ENCODE measurements at regions of chr9 and their contacts with region 1.

Region 1: DNA sequence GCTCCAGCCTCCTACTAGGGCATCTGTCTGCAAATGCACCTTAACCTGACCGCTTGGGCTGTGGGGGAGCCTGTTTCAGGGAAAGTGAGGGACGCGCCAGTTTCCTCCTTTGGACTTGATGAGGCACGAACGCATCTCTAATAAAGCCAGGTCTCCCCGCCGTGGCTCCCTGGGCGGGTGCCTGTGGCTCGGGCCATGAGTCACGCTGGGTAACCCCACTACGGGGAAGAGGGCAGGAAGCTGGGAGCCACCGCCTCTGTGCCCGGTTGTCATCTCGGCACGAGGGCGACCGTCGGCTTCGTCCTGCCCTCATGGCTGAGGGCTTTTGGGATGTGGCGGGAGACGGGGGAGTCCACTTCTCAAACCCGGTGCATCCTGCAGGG is 12.1 kb downstream of the NOTCH1 start:
- DNase-seq: peak in 1 of 2 donors; percentile 54
- ATAC-seq: no peak
- H3K4me3 ChIP-seq: peak overlapping the region; percentile 25
- H3K27ac ChIP-seq: no peak overlapping the region
- H3K4me1 ChIP-seq: peaks cover 23% of the 10 kb centered on the region
- H3K27me3 ChIP-seq: no peaks in the 10 kb centered on the region
- CTCF ChIP-seq: no peak

Region 2: GRCh38 chr9:136494531-136495215 is 39.1 kb before region 1 on chr9:
- intact Hi-C with region 1: loop called in 1 of 2 experiments (anchors 5 kb)
- DNase-seq: no peak
- ATAC-seq: no peak
- H3K4me3 ChIP-seq: no peak overlapping the region
- H3K27ac ChIP-seq: no peak overlapping the region
- H3K4me1 ChIP-seq: no peaks in the 10 kb centered on the region
- H3K27me3 ChIP-seq: no peaks in the 10 kb centered on the region
- CTCF ChIP-seq: no peak

Region 3: GRCh38 chr9:136742591-136743391 is 209.0 kb after region 1 on chr9 and contains the start of gene LCN10:
- intact Hi-C with region 1: no loop called
- DNase-seq: no peak
- ATAC-seq: peak in 3 of 4 donors; percentile 4 to 32 (median 29)
- H3K4me3 ChIP-seq: no peak within 1 kb of the TSS
- H3K27ac ChIP-seq: no peak within 1 kb of the TSS
- H3K4me1 ChIP-seq: no peaks in the 10 kb centered on the region
- H3K27me3 ChIP-seq: peaks cover 0 to 45% (median 16%) of the 10 kb centered on the region in 3 donors
- CTCF ChIP-seq: no peak
- total RNA-seq, gene LCN10: 3.2 to 4.9 (median 4.1) TPM in 3 of 4 donors, not detected in the other

Measured in psoas muscle (tissue), 8 donors.